Tibial artery (tissue), 4 donors: ENCODE measurements at regions of chr1 and their contacts with region 1.

Region 1: GRCh38 chr1:44652445-44653106 is 21.7 kb downstream of the TMEM53 start:
- DNase-seq: peak; percentile 80 to 83
- H3K4me3 ChIP-seq: no peak overlapping the region
- H3K27ac ChIP-seq: no peak overlapping the region
- H3K4me1 ChIP-seq: no peaks in the 10 kb centered on the region
- H3K27me3 ChIP-seq: no peaks in the 10 kb centered on the region
- CTCF ChIP-seq: peak; percentile 87 to 93

Region 2: GRCh38 chr1:44609412-44609767 is 43.2 kb before region 1 on chr1:
- intact Hi-C with region 1: loop called (anchors 5 kb)
- DNase-seq: peak in 1 of 2 donors; percentile 34
- H3K4me3 ChIP-seq: no peak overlapping the region
- H3K27ac ChIP-seq: no peak overlapping the region
- H3K4me1 ChIP-seq: no peaks in the 10 kb centered on the region
- H3K27me3 ChIP-seq: peaks cover 0 to 75% of the 10 kb centered on the region in 2 donors
- CTCF ChIP-seq: peak; percentile 33 to 51

Region 3: DNA sequence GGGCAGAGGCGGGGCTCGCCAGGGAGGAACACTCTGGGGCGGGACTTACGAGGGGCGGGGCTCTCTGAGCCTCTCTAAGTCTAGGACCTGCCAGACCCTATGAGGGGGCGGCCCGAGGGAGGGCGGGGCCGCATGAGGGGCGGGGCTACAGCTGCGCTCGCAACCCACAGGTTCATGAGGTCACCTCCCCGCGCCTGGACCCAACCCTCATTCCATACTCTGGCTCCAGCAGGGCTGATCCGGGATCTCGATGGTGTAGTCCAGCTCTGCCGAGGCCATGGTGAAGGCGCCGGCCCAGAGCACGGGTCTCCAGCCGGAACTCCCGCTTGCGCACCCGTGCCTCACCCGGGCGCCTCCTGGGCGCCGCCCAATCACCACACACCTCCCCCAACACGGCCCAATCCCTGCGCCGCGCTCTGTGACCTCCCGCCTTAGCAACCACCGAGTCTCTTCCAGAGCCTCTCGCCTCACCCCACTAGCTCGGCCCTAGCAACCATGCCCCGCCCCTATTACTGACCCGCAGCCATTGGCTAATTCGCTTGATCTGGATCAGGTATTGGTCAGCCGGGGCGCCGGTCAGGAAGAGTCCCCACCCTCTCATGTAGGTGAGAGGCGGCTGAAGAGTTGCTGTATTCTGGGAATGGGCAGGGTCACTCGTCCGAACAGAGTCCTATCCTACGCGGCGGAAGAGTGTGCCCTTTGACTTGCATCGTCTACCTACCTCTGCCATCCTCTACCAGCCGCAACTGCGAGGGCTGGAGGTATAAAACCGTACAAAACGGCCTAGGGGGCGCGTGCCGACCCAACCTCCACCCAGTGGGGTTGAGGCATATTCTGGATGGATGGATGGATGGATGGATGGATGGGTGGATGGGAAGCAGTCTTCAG is 21.8 kb after region 1 on chr1 and contains the starts of genes ARMH1 and TMEM53:
- intact Hi-C with region 1: no loop called
- DNase-seq: peak; percentile 99 to 100
- H3K4me3 ChIP-seq: peak within 1 kb of the TSS; percentile 64 to 74
- H3K27ac ChIP-seq: peak within 1 kb of the TSS; percentile 93
- H3K4me1 ChIP-seq: peaks cover 0 to 25% (median 19%) of the 10 kb centered on the region in 4 donors
- H3K27me3 ChIP-seq: peaks cover 0 to 2% of the 10 kb centered on the region in 2 donors
- CTCF ChIP-seq: peak in 1 of 2 experiments; percentile 7

Region 4: GRCh38 chr1:44714944-44715571 is 62.5 kb after region 1 on chr1:
- intact Hi-C with region 1: no loop called
- DNase-seq: peak; percentile 64 to 75
- H3K4me3 ChIP-seq: no peak overlapping the region
- H3K27ac ChIP-seq: no peak overlapping the region
- H3K4me1 ChIP-seq: peaks cover 0 to 5% (median 0%) of the 10 kb centered on the region in 4 donors
- H3K27me3 ChIP-seq: peaks cover 0 to 3% of the 10 kb centered on the region in 2 donors
- CTCF ChIP-seq: peak; percentile 75 to 90